GM12878 (cell line): ENCODE measurements at regions of chr15 and their contacts with region 1.

Region 1: DNA sequence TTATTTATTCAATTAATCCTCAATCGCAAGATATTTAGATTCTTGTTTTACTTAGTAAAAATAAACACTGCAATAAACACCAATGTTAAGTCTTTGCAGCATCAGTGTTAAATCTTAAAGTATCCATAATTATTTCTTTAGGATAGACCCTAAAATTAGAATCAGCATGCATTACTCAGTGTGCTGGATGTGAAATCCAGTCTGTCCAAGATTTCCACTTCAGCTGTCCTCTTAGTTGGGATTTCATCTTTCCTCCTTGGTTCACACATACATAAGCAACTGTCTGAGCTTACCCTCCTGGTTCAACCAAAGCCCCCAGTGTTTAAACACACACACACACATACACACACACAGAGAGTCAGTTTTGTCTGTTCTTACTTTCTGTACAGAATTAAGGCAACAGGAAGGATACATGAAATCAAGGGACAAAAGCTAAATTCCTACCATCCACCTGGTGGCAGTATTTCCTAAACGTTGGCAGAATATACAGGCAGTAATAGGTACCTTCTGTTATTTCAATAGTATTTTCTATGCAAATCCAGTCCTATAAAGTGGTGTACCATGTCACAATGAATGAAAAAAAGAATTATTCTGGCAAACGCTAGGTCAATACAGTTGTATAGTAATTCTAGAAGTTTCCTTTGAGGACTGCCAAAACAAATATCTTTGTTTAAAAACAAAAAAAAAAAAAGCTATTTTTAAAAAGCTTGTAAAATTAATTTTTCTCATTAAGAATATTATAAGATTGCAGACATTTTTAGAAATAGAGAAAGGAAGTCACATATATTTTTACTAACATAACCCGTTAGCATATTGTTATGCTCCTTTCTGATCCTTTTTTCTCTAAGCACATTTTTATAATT is 27.3 kb upstream of the DMXL2 start:
- DNase-seq: peak; percentile 63
- ATAC-seq: peak; percentile 96
- H3K4me3 ChIP-seq: no peak overlapping the region
- H3K27ac ChIP-seq: no peak overlapping the region
- H3K4me1 ChIP-seq: peaks cover 3% of the 10 kb centered on the region; the same call in 1 of the 2 replicates
- H3K27me3 ChIP-seq: 0 out of 4 replicates have a peak, but pooled peaks cover 0 to 2% of the 10 kb centered on the region in 2 experiments
- CTCF ChIP-seq: peak; percentile 60 to 85 (median 69)
- EP300 ChIP-seq: no peak
- POLR2A ChIP-seq: no peak
- RAD21 ChIP-seq: peak; percentile 99

Region 2: DNA sequence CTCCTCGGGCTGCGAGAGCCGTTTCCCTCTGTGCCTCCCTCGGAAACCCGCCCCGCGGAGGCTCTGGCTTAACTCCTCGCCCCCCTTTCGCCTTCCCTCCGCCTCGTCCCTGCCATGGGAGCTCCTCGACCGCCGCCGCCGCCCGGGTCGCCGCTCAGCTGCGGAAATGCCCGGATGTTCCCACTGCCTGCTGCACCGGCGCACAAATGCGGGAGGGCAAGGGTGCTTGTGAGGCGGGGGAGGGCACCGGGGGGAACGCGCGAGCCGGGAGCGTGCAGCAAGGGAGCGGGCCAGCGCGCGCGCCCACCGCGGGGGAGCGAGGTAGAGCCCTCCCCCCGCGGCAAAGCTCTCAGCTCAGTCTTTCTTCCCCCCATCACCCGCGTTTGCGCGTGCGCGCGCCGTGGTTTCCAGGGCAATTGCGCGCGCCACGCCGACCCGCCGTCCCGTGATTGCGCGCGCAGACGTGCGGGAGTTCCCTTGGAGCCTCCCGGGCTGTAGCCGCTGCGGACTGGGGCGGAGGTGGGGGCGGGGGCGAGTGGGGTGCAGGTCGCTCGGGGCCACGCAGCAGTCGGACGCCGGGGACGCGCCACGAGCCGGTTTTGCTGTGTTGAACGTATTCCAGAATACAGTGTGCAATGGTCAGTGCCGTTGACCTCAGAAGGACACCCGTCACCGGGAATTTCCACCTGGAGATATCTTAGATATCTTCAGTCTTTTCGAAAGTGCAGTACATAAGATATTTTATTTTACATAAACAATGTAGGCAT is 27.1 kb before region 1 on chr15 and contains the start of gene DMXL2:
- CTCF ChIA-PET with region 1: interaction called, 10 read pairs
- POLR2A ChIA-PET with region 1: no interaction called
- RAD21 ChIA-PET with region 1: interaction called, 4 read pairs
- SMC1A ChIA-PET with region 1: interaction called, 6 read pairs
- in situ Hi-C with region 1: no loop called
- intact Hi-C with region 1: no loop called
- DNase-seq: no peak
- ATAC-seq: peak; percentile 62
- H3K4me3 ChIP-seq: peak within 1 kb of the TSS; percentile 75
- H3K27ac ChIP-seq: peak within 1 kb of the TSS; percentile 64
- H3K4me1 ChIP-seq: peaks cover 30% of the 10 kb centered on the region
- H3K27me3 ChIP-seq: no peaks in the 10 kb centered on the region
- CTCF ChIP-seq: no peak
- EP300 ChIP-seq: no peak
- POLR2A ChIP-seq: peak; percentile 64; the same call in 1 of the 2 replicates
- RAD21 ChIP-seq: no peak
- polyA plus RNA-seq, gene DMXL2: 8.5 to 12.8 TPM

Region 3: GRCh38 chr15:51726351-51727073 is 76.6 kb after region 1 on chr15:
- CTCF ChIA-PET with region 1: interaction called, 82 read pairs
- POLR2A ChIA-PET with region 1: no interaction called
- RAD21 ChIA-PET with region 1: interaction called, 29 read pairs
- SMC1A ChIA-PET with region 1: interaction called, 52 read pairs
- in situ Hi-C with region 1: no loop called
- intact Hi-C with region 1: loop called (anchors 1 kb)
- DNase-seq: no peak
- ATAC-seq: peak; percentile 91
- H3K4me3 ChIP-seq: no peak overlapping the region; the same call in 1 of the 2 replicates
- H3K27ac ChIP-seq: peak overlapping the region; percentile 72
- H3K4me1 ChIP-seq: peaks cover 32% of the 10 kb centered on the region
- H3K27me3 ChIP-seq: no peaks in the 10 kb centered on the region
- CTCF ChIP-seq: no peak
- EP300 ChIP-seq: no peak
- POLR2A ChIP-seq: no peak
- RAD21 ChIP-seq: 0 out of 2 replicates have a peak, but pooled peaks have one; percentile 12

Region 4: GRCh38 chr15:51737280-51738017 is 87.6 kb after region 1 on chr15 and contains the start of gene LYSMD2:
- CTCF ChIA-PET with region 1: interaction called, 82 read pairs
- POLR2A ChIA-PET with region 1: interaction called, 3 read pairs
- RAD21 ChIA-PET with region 1: interaction called, 33 read pairs
- SMC1A ChIA-PET with region 1: interaction called, 52 read pairs
- in situ Hi-C with region 1: no loop called
- intact Hi-C with region 1: loop called (anchors 1 kb)
- DNase-seq: no peak
- ATAC-seq: peak; percentile 46
- H3K4me3 ChIP-seq: peak within 1 kb of the TSS; percentile 77
- H3K27ac ChIP-seq: peak within 1 kb of the TSS; percentile 94
- H3K4me1 ChIP-seq: peaks cover 25% of the 10 kb centered on the region
- H3K27me3 ChIP-seq: no peaks in the 10 kb centered on the region
- CTCF ChIP-seq: no peak
- EP300 ChIP-seq: no peak; a peak in 1 of 4 replicates
- POLR2A ChIP-seq: peak; percentile 63
- RAD21 ChIP-seq: no peak
- polyA plus RNA-seq, gene LYSMD2: 30.5 to 61.3 TPM

Region 5: DNA sequence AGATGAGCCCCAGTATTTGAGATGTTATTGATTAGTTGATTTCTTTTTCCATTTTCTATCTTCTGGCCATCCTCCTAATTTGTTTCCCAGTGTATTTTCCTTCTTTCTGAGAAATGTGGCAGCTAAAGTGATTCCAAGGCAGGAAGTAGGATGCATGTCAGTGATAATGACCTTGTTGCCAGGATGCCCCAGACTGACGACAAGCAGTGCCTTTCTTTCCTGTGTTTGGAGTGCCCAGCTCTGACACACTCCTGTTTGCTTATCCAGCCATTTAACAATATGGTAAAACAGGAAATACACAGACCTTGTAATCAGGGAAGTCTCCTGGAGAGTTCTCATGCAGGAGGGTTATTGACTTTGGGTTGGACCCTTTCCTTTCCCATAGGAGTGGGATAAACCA is 121.9 kb after region 1 on chr15:
- CTCF ChIA-PET with region 1: interaction called, 314 read pairs
- POLR2A ChIA-PET with region 1: interaction called, 6 read pairs
- RAD21 ChIA-PET with region 1: interaction called, 232 read pairs
- SMC1A ChIA-PET with region 1: interaction called, 170 read pairs
- in situ Hi-C with region 1: no loop called
- intact Hi-C with region 1: no loop called
- DNase-seq: no peak
- ATAC-seq: no peak
- H3K4me3 ChIP-seq: no peak overlapping the region
- H3K27ac ChIP-seq: no peak overlapping the region
- H3K4me1 ChIP-seq: no peaks in the 10 kb centered on the region
- H3K27me3 ChIP-seq: no peaks in the 10 kb centered on the region
- CTCF ChIP-seq: no peak
- EP300 ChIP-seq: no peak
- POLR2A ChIP-seq: no peak
- RAD21 ChIP-seq: no peak